K562 (cell line): ENCODE measurements at regions of chr6 and their contacts with region 1.

Region 1: GRCh38 chr6:160041608-160042007 is 72.7 kb downstream of the IGF2R start:
- DNase-seq: no peak
- ATAC-seq: peak; percentile 56
- H3K4me3 ChIP-seq: no peak overlapping the region
- H3K27ac ChIP-seq: 0 out of 3 replicates have a peak overlapping the region, but pooled peaks have one; percentile 13
- H3K4me1 ChIP-seq: peaks cover 5 to 9% of the 10 kb centered on the region in 2 experiments; a peak in 3 of 5 replicates
- H3K27me3 ChIP-seq: no peaks in the 10 kb centered on the region
- CTCF ChIP-seq: no peak
- EP300 ChIP-seq: no peak
- POLR2A ChIP-seq: no peak
- RAD21 ChIP-seq: no peak

Region 2: GRCh38 chr6:159880412-159880975 is 161.1 kb before region 1 on chr6:
- CTCF ChIA-PET with region 1: no interaction called
- POLR2A ChIA-PET with region 1: no interaction called
- in situ Hi-C with region 1: no loop called
- intact Hi-C with region 1: loop called (anchors 10 kb)
- DNase-seq: no peak
- ATAC-seq: no peak
- H3K4me3 ChIP-seq: no peak overlapping the region
- H3K27ac ChIP-seq: no peak overlapping the region
- H3K4me1 ChIP-seq: no peaks in the 10 kb centered on the region
- H3K27me3 ChIP-seq: peaks cover 19 to 31% of the 10 kb centered on the region in 2 experiments
- CTCF ChIP-seq: no peak
- EP300 ChIP-seq: no peak
- POLR2A ChIP-seq: no peak
- RAD21 ChIP-seq: no peak